A673 (cell line): ENCODE measurements at regions of chr4 and their contacts with region 1.

Region 1: DNA sequence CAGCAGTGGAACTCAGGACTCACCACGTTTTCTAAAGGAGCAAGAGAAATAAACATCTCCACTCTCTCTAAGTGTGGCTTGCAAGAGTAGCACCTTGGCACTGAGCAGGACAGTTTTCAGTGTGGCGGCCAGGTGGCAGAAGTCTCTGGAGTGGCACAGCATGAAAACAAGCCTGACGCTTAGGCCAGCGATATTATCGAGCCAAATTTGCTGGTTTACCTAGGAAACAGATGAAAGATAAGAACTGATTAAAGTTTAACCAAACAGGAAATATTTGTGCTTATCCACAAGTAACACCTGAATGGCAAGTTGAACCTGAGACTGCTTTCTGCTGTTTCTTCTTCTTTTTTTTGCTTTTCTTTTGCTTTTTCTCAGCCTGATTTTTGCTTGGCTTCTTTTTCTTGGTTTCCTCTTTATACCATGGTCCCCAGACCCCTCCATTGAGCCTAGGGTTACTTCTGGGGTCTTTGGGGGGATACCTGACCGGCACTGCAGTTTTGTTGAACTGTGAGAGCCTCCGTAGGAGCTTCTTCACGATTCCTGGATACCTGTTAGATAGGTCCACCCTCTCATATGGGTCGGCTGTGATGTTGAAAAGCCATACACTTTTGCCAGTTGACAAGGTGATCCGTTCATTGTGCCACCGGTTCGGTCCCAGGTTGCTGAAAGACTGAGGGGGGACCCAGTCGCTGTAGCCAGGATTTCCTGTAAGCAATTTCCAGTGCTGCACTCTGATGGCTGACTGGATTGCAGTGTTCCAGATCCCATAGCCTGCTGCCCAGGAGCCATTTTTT is 77.3 kb downstream of the ARSJ start:
- DNase-seq: no peak
- H3K4me3 ChIP-seq: no peak overlapping the region
- H3K27ac ChIP-seq: no peak overlapping the region
- H3K4me1 ChIP-seq: peaks cover 15% of the 10 kb centered on the region
- H3K27me3 ChIP-seq: no peaks in the 10 kb centered on the region
- CTCF ChIP-seq: no peak

Region 2: GRCh38 chr4:113547487-113548042 is 354.6 kb before region 1 on chr4:
- CTCF ChIA-PET with region 1: no interaction called
- POLR2A ChIA-PET with region 1: no interaction called
- intact Hi-C with region 1: loop called (anchors 10 kb)
- DNase-seq: peak; percentile 92
- H3K4me3 ChIP-seq: no peak overlapping the region
- H3K27ac ChIP-seq: no peak overlapping the region
- H3K4me1 ChIP-seq: peaks cover 3% of the 10 kb centered on the region
- H3K27me3 ChIP-seq: no peaks in the 10 kb centered on the region
- CTCF ChIP-seq: peak; percentile 97

Region 3: GRCh38 chr4:113781439-113782040 is 120.7 kb before region 1 on chr4:
- CTCF ChIA-PET with region 1: no interaction called
- POLR2A ChIA-PET with region 1: no interaction called
- intact Hi-C with region 1: loop called (anchors 1 kb)
- DNase-seq: peak; percentile 56
- H3K4me3 ChIP-seq: no peak overlapping the region
- H3K27ac ChIP-seq: no peak overlapping the region
- H3K4me1 ChIP-seq: peaks cover 7% of the 10 kb centered on the region
- H3K27me3 ChIP-seq: no peaks in the 10 kb centered on the region
- CTCF ChIP-seq: peak; percentile 78

Region 4: GRCh38 chr4:113878668-113879067 is 23.5 kb before region 1 on chr4:
- CTCF ChIA-PET with region 1: no interaction called
- POLR2A ChIA-PET with region 1: no interaction called
- intact Hi-C with region 1: no loop called
- DNase-seq: peak; percentile 29
- H3K4me3 ChIP-seq: no peak overlapping the region
- H3K27ac ChIP-seq: no peak overlapping the region
- H3K4me1 ChIP-seq: no peaks in the 10 kb centered on the region
- H3K27me3 ChIP-seq: no peaks in the 10 kb centered on the region
- CTCF ChIP-seq: peak; percentile 47

Region 5: DNA sequence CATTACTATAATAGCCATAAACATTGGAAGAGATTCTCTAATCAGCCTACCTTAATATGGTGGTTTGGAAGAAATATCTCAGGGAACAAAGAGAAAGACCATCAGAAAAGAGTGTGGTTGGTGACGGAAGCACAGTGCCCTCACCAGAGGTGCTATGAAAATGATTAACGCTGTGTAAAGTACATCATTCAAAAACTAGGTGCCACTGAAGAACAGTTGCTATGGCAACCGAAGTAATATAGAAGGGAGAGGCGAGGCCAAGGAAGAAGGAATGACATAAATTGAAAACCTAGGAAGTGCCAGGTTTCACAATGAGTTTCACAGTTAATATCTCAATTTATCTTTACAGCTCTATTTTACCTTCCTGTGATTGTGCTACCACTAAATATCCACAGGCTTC is 134.2 kb after region 1 on chr4:
- CTCF ChIA-PET with region 1: no interaction called
- POLR2A ChIA-PET with region 1: no interaction called
- intact Hi-C with region 1: no loop called
- DNase-seq: no peak
- H3K4me3 ChIP-seq: no peak overlapping the region
- H3K27ac ChIP-seq: no peak overlapping the region
- H3K4me1 ChIP-seq: no peaks in the 10 kb centered on the region
- H3K27me3 ChIP-seq: no peaks in the 10 kb centered on the region
- CTCF ChIP-seq: no peak